Activated T-helper 2 cell treated with anti-CD3 and anti-CD28 coated beads, Interferon-gamma antibody, Interleukin-2, Interleukin-4, amounts not matched to agents 10 μg/mL and 5 μg/mL and 100 μg/mL, durations not matched to agents 14 hours and 24 hours and 36 hours (primary cell): ENCODE measurements at regions of chr11 and their contacts with region 1.

Region 1: GRCh38 chr11:100575870-100576705 is 111.0 kb upstream of the ARHGAP42 start:
- DNase-seq: no peak
- H3K4me3 Mint-ChIP-seq: no peak overlapping the region
- H3K27ac Mint-ChIP-seq: no peak overlapping the region
- H3K4me1 Mint-ChIP-seq: no peaks in the 10 kb centered on the region
- H3K27me3 Mint-ChIP-seq: no peaks in the 10 kb centered on the region

Region 2: DNA sequence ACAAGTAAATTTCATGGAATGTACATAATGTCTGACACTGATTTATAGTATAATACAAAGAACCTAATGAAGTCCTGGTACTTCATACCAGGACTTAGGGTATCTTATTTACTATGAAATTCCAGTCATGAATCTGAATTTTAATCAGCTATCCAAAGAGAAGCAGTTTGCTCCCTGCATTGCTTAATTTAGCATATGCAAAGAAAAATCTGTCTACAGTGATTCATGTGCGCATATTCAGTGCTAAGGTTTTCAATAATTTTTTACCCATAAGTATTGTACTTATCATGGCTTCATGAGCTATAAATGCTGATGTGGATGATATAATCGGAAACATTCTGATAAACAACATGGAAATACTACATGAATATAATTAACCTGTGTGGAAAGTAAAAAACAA is 74.6 kb before region 1 on chr11:
- intact Hi-C with region 1: no loop called
- DNase-seq: no peak
- H3K4me3 Mint-ChIP-seq: no peak overlapping the region
- H3K27ac Mint-ChIP-seq: no peak overlapping the region
- H3K4me1 Mint-ChIP-seq: no peaks in the 10 kb centered on the region
- H3K27me3 Mint-ChIP-seq: no peaks in the 10 kb centered on the region

Region 3: DNA sequence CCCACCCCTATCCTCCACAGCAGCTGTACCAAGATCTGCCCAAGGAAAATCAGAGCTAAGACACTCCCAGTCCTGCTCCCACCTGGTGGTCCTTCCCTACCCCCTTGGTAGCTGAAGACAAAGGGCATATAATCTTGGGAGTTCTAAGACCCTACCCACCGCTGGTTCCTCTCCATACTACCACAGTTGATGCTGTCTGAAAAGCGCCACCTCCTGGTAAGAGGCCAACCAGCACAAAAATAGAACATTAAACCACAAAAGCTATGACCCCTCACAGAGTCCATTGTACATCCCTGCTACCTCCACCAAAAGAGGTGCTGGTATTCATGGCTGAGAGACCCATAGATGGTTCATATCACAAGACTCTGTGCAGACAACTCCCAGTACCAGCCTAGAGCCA is 50.5 kb before region 1 on chr11:
- intact Hi-C with region 1: no loop called
- DNase-seq: no peak
- H3K4me3 Mint-ChIP-seq: no peak overlapping the region
- H3K27ac Mint-ChIP-seq: no peak overlapping the region
- H3K4me1 Mint-ChIP-seq: no peaks in the 10 kb centered on the region
- H3K27me3 Mint-ChIP-seq: no peaks in the 10 kb centered on the region

Region 4: DNA sequence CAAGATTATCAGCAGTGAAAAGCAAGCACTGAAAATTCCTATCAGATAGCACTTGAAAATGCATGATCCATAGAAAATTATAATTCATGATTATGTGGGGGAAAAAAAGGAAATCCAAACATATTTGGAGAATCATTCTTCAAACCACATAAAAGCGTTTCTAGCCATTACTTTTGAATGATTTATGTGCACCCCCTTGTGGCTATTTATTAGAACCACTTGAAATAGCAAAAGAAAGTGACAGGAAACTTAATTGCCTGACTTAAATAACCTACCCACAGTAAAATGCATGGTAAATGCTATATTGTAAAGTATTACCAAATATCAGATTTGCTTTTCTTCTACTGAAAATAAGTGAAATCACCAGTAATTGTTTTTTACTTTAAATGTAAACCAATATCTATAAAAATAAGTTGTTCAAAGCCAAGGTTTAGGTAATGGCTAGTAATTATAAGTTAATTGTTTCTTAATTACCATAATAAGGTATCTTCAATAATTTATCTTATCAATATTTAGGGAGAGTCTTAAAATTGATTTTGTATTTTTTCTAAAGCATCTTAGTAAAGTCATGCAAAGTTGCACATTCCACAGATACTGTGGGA is 279.5 kb after region 1 on chr11:
- intact Hi-C with region 1: loop called (anchors 2 kb)
- DNase-seq: no peak
- H3K4me3 Mint-ChIP-seq: no peak overlapping the region
- H3K27ac Mint-ChIP-seq: no peak overlapping the region
- H3K4me1 Mint-ChIP-seq: no peaks in the 10 kb centered on the region
- H3K27me3 Mint-ChIP-seq: no peaks in the 10 kb centered on the region

Region 5: GRCh38 chr11:100930185-100930778 is 354.2 kb after region 1 on chr11:
- intact Hi-C with region 1: loop called (anchors 1 kb)
- DNase-seq: no peak
- H3K4me3 Mint-ChIP-seq: no peak overlapping the region
- H3K27ac Mint-ChIP-seq: no peak overlapping the region
- H3K4me1 Mint-ChIP-seq: no peaks in the 10 kb centered on the region
- H3K27me3 Mint-ChIP-seq: no peaks in the 10 kb centered on the region